GM10248 (cell line): ENCODE measurements at regions of chr9 and their contacts with region 1.

Region 1: GRCh38 chr9:37329576-37329975 is 92.9 kb upstream of the GRHPR start:
- DNase-seq: no peak
- CTCF ChIP-seq: peak; percentile 65

Region 2: GRCh38 chr9:36148311-36149051 is 1181.1 kb before region 1 on chr9:
- CTCF ChIA-PET with region 1: no interaction called
- POLR2A ChIA-PET with region 1: no interaction called
- DNase-seq: peak; percentile 58
- CTCF ChIP-seq: no peak

Region 3: DNA sequence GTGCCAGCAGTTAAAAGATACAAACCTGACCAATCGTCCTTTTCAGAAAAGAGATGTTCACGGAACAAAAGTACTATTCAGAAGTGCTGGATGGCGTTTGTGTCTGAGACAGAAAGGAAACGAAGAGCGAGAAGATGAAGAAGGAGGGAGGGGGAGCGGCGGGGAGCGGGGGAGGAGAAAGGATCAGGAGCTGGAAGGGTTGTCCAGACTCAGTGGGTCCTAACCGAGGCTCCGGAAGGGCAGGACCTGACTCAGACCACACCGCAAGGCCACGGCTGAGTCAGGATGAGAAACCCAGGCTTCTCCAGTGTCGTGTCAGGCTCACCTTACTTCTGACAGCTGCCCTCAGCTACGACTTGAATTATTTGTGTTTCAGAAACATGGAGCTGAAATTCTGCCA is 341.7 kb before region 1 on chr9:
- CTCF ChIA-PET with region 1: interaction called, 10 read pairs
- POLR2A ChIA-PET with region 1: no interaction called
- DNase-seq: peak; percentile 54
- CTCF ChIP-seq: no peak

Region 4: GRCh38 chr9:37027582-37028419 is 301.8 kb before region 1 on chr9:
- CTCF ChIA-PET with region 1: interaction called, 16 read pairs
- POLR2A ChIA-PET with region 1: no interaction called
- DNase-seq: peak; percentile 99
- CTCF ChIP-seq: no peak

Region 5: DNA sequence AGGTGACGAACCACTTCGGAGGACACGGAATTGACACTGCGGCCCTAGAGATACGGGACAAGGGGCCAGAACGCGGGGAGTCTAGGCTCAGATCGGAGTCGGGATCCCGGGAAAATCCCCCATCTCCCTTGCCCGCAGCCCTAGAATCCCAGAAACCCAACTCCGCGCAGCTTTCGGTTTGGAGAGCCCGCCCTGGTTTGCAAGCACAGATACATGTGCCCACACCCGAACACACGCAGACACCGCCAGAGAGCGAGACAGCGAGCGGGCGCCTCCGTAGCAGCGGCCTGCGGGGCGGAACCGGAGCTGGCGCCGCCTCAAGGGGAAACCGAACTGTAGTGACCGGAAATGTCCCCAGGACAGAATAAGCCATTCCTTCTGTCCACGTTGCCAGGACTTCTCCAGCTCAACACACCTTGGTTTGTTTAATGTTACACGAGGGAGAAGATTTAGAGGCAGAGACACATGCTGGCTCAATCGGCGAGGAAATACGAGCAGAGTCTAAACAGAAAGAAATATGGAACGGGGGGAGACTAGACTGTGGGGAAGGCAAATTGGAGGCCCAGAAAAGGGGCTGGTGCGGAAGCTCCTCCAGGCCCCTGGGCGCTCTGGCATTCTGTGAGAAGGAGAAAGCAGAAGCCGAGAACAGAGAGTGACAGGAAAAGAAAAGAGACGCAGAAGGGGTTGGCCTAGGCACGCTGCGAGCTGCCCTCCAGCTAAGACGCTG is 292.6 kb before region 1 on chr9:
- CTCF ChIA-PET with region 1: interaction called, 11 read pairs
- POLR2A ChIA-PET with region 1: no interaction called
- DNase-seq: peak; percentile 59
- CTCF ChIP-seq: no peak

Region 6: DNA sequence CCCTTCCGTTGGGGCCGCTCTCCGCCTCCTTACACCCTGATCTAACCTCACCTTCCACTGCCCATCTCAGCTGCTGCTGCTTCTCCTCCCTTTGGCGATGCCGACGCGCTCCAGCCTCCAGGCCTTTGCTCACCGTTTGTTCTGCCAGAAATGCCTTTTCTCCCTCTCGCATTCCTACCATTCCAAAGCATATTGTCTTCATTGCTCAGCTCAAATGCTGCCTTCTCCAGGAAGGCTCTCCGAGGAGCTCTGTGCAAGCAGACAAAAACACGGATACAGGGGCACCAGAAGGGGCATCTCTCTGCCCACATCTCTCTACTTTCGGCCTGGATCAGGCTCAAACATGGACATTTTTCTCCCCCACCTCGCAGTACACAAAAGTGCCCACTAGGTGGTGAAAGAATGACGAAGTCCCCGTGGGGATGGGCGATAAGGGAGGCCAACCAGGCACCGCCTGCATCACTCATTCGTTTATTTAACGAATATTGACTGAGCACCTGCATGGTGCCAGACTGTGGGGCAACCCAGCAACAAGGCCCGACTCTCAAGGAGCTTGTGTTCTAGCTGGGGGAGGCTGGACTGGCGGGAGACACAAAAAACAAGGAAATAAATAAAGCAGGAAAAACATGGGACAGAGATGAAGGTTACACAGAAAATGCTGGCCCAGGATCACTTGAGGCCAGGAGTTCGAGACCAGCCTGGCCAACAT is 85.6 kb after region 1 on chr9:
- CTCF ChIA-PET with region 1: interaction called, 13 read pairs
- POLR2A ChIA-PET with region 1: no interaction called
- DNase-seq: peak; percentile 76
- CTCF ChIP-seq: peak; percentile 81